SK-N-SH (cell line): ENCODE measurements at regions of chr11 and their contacts with region 1.

Region 1: GRCh38 chr11:46529095-46529905 is 64.5 kb downstream of the AMBRA1 start:
- DNase-seq: peak; percentile 83
- H3K4me3 ChIP-seq: peak overlapping the region in 1 of 2 experiments; percentile 23; a peak in 1 of 4 replicates
- H3K27ac ChIP-seq: no peak overlapping the region
- H3K4me1 ChIP-seq: no peaks in the 10 kb centered on the region; a peak in 1 of 4 replicates
- H3K27me3 ChIP-seq: no peaks in the 10 kb centered on the region
- CTCF ChIP-seq: peak; percentile 94
- EP300 ChIP-seq: no peak
- RAD21 ChIP-seq: peak; percentile 75

Region 2: GRCh38 chr11:46149342-46149741 is 380.0 kb before region 1 on chr11:
- CTCF ChIA-PET with region 1: no interaction called
- POLR2A ChIA-PET with region 1: no interaction called
- DNase-seq: no peak
- H3K4me3 ChIP-seq: no peak overlapping the region
- H3K27ac ChIP-seq: no peak overlapping the region
- H3K4me1 ChIP-seq: no peaks in the 10 kb centered on the region
- H3K27me3 ChIP-seq: peaks cover 8% of the 10 kb centered on the region; the same call in 1 of the 2 replicates
- CTCF ChIP-seq: no peak
- EP300 ChIP-seq: no peak
- RAD21 ChIP-seq: no peak

Region 3: DNA sequence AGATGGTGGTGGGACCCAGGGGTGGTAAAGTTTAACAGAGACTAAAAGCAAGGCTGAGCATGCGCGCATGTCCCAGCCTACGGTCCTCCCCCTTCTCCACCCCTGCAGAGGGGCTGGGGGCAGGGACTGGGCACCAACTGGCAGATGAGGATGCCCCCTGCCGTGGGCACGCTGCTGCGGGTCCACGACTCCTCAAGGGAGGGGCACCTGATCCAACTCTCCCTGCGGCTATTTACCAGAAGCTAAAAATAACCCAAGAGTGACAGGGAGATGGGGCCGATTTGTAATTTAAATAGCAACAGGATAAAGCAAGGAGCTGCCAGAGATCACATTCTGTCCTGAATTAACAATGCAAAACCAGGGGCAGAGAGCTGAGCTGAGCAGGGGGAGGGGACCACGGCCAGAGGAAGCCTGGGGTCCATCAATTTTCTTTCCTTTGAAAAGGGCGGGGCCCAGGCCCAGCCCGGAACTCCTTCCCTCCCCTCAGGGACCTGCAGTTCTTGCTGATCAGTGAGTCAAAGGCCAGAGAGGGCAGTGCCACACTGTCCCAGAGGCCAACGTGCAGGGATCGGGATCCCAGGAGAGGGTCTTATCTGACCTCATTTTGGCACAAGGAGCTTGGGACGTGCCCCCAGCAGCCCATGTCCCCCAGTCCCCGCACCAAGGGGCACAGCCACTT is 190.2 kb before region 1 on chr11:
- CTCF ChIA-PET with region 1: no interaction called
- POLR2A ChIA-PET with region 1: no interaction called
- DNase-seq: no peak
- H3K4me3 ChIP-seq: no peak overlapping the region
- H3K27ac ChIP-seq: no peak overlapping the region
- H3K4me1 ChIP-seq: peaks cover 9 to 13% of the 10 kb centered on the region in 2 experiments; a peak in 3 of 4 replicates
- H3K27me3 ChIP-seq: no peaks in the 10 kb centered on the region
- CTCF ChIP-seq: no peak
- EP300 ChIP-seq: no peak
- RAD21 ChIP-seq: no peak

Region 4: DNA sequence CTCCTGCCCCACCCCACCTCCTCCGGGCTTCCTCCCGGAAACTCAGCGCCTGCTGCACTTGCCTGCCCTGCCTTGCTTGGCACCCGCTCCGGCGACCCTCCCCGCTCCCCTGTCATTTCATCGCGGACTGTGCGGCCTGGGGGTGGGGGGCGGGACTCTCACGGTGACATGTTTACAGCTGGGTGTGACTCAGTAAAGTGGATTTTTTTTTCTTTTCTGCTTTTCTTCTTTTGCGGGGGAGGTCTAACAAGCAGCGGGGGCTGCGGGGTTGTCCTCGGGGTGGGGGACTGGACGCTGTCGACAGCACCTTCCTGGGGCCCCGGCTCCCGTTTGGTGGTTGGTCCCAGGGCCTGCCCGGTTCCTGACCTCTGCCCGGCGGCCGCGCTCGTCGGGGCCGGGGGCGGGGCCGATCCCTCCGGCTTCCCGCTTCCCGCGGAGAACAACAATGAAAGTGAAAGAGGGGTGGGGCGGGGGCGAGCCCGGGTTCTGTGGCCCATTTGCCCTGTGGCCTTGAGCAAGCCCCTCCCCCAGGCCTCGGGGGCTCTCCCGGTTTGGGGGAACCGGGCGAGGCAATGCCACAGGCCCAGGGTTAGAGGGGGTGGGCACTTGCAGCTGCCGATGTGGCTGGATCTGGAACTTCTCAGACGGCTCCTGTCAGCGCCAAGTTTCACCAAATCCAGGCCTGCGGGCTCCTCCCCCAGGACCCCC is 148.8 kb before region 1 on chr11:
- CTCF ChIA-PET with region 1: interaction called, 19 read pairs
- POLR2A ChIA-PET with region 1: no interaction called
- DNase-seq: peak; percentile 87
- H3K4me3 ChIP-seq: peak overlapping the region; percentile 60 to 63
- H3K27ac ChIP-seq: peak overlapping the region; percentile 61 to 88
- H3K4me1 ChIP-seq: peaks cover 10 to 23% of the 10 kb centered on the region in 2 experiments; a peak in 2 of 4 replicates
- H3K27me3 ChIP-seq: no peaks in the 10 kb centered on the region
- CTCF ChIP-seq: no peak
- EP300 ChIP-seq: no peak
- RAD21 ChIP-seq: no peak

Region 5: DNA sequence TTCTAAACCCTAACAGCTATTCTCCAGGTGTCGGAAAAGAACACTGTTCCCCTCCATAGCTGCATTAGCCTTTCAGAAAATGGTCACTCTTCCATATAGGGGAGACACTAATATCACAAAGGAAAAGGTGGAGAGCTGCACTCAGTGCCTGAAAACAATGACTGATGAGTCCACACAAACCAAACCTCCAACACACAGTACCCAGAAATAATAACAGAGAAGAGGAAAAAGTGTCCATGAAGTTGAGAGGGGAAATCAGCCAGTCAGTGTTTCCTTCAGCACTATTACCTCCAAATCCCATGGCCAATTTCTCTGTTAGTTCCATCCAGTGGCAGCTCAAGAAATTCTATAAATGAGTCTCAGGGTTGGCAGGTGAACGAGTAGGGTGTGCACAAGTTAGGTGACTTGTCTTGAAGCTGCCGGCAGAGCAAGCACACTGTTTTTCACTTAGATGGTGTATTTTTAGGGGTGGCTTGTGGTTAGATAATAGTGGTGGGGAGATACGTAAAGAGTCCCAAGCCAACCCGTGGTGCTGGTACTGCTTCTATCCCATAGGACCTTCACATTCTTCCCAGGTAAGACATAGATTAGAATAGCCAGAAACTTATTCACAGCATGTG is 53.3 kb before region 1 on chr11:
- CTCF ChIA-PET with region 1: interaction called, 20 read pairs
- POLR2A ChIA-PET with region 1: no interaction called
- DNase-seq: no peak
- H3K4me3 ChIP-seq: no peak overlapping the region
- H3K27ac ChIP-seq: no peak overlapping the region
- H3K4me1 ChIP-seq: peaks cover 3 to 19% of the 10 kb centered on the region in 2 experiments; a peak in 3 of 4 replicates
- H3K27me3 ChIP-seq: no peaks in the 10 kb centered on the region
- CTCF ChIP-seq: no peak
- EP300 ChIP-seq: no peak
- RAD21 ChIP-seq: no peak

Region 6: DNA sequence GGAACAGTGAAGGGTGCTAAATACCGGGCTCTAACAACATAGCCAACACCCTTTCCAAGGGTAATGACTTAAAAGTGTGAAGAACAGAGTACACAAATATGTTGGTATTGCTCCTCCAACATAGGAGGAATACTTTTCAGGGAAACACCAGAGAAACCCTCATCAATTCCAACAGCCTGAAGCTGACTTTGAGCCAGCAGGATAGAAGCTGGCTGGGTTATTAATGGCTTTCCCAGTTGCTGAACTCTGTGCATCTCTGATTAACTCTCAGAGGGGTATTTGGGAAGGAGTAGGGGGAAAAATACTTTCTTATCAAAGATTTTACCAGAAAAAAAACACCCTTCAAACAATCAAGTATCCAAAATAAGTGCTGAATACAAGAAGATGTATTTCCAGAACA is 31.1 kb before region 1 on chr11:
- CTCF ChIA-PET with region 1: interaction called, 131 read pairs
- POLR2A ChIA-PET with region 1: no interaction called
- DNase-seq: no peak
- H3K4me3 ChIP-seq: no peak overlapping the region
- H3K27ac ChIP-seq: no peak overlapping the region
- H3K4me1 ChIP-seq: peaks cover 0 to 8% of the 10 kb centered on the region in 2 experiments; a peak in 1 of 4 replicates
- H3K27me3 ChIP-seq: no peaks in the 10 kb centered on the region
- CTCF ChIP-seq: no peak
- EP300 ChIP-seq: no peak
- RAD21 ChIP-seq: no peak

Region 7: GRCh38 chr11:46514370-46514769 is 14.9 kb before region 1 on chr11:
- CTCF ChIA-PET with region 1: interaction called, 21 read pairs
- POLR2A ChIA-PET with region 1: no interaction called
- DNase-seq: no peak
- H3K4me3 ChIP-seq: no peak overlapping the region
- H3K27ac ChIP-seq: peak overlapping the region; percentile 52 to 96; a peak in 3 of 4 replicates
- H3K4me1 ChIP-seq: peaks cover 16 to 26% of the 10 kb centered on the region in 2 experiments; a peak in 3 of 4 replicates
- H3K27me3 ChIP-seq: no peaks in the 10 kb centered on the region
- CTCF ChIP-seq: no peak
- EP300 ChIP-seq: no peak
- RAD21 ChIP-seq: no peak

Region 8: DNA sequence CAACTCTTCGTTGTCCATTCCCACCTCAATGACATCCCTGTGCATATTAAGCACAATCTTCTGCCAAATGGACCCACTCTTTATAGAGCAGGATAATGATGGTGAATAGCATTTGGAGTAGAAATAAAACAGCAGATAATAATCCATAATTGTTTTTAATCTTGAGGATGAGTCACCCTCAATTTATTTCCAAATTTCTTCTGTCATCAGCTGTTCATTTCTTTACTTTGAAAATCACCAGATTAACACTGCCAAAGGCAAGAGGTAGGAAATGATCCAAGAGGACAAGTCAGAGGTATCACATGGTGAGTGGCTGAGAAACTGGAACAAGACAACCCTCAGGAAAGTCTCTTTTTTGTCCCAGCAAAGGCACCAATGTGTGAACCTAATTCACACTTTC is 71.8 kb after region 1 on chr11:
- CTCF ChIA-PET with region 1: no interaction called
- POLR2A ChIA-PET with region 1: no interaction called
- DNase-seq: no peak
- H3K4me3 ChIP-seq: no peak overlapping the region
- H3K27ac ChIP-seq: no peak overlapping the region
- H3K4me1 ChIP-seq: no peaks in the 10 kb centered on the region
- H3K27me3 ChIP-seq: no peaks in the 10 kb centered on the region
- CTCF ChIP-seq: no peak
- EP300 ChIP-seq: no peak
- RAD21 ChIP-seq: no peak

Region 9: DNA sequence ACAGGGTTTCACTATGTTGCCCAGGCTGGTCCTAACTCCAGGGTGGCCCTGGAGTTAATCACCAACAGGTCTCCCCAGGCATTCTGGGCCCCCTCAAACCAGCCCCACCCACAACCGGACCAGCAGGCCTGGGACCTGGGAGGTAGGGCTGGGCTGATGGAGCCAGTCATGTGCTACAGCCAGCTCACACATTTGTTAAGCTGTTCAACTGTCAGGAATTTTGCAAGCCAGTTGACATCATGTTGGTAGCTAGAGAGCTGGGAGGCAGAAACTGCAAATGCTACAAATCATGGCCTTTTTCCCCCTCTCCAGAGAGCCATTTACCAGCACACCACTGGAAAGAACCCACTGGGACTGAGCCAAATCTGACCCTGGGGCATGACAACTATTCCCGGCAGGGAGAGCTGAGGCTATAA is 164.3 kb after region 1 on chr11:
- CTCF ChIA-PET with region 1: no interaction called
- POLR2A ChIA-PET with region 1: no interaction called
- DNase-seq: no peak
- H3K4me3 ChIP-seq: no peak overlapping the region
- H3K27ac ChIP-seq: no peak overlapping the region
- H3K4me1 ChIP-seq: peaks cover under 1 to 28% of the 10 kb centered on the region in 2 experiments; a peak in 2 of 4 replicates
- H3K27me3 ChIP-seq: no peaks in the 10 kb centered on the region
- CTCF ChIP-seq: no peak
- EP300 ChIP-seq: no peak
- RAD21 ChIP-seq: no peak